Activated T-helper 2 cell treated with anti-CD3 and anti-CD28 coated beads, Interferon-gamma antibody, Interleukin-2, Interleukin-4, amounts not matched to agents 10 μg/mL and 5 μg/mL and 100 μg/mL, durations not matched to agents 14 hours and 24 hours and 36 hours (primary cell): ENCODE measurements at regions of chr22 and their contacts with region 1.

Region 1: GRCh38 chr22:37043828-37044538 is 7.6 kb upstream of the KCTD17 start:
- DNase-seq: peak; percentile 45
- H3K4me3 Mint-ChIP-seq: no peak overlapping the region
- H3K27ac Mint-ChIP-seq: no peak overlapping the region
- H3K4me1 Mint-ChIP-seq: peaks cover 15% of the 10 kb centered on the region
- H3K27me3 Mint-ChIP-seq: no peaks in the 10 kb centered on the region

Region 2: DNA sequence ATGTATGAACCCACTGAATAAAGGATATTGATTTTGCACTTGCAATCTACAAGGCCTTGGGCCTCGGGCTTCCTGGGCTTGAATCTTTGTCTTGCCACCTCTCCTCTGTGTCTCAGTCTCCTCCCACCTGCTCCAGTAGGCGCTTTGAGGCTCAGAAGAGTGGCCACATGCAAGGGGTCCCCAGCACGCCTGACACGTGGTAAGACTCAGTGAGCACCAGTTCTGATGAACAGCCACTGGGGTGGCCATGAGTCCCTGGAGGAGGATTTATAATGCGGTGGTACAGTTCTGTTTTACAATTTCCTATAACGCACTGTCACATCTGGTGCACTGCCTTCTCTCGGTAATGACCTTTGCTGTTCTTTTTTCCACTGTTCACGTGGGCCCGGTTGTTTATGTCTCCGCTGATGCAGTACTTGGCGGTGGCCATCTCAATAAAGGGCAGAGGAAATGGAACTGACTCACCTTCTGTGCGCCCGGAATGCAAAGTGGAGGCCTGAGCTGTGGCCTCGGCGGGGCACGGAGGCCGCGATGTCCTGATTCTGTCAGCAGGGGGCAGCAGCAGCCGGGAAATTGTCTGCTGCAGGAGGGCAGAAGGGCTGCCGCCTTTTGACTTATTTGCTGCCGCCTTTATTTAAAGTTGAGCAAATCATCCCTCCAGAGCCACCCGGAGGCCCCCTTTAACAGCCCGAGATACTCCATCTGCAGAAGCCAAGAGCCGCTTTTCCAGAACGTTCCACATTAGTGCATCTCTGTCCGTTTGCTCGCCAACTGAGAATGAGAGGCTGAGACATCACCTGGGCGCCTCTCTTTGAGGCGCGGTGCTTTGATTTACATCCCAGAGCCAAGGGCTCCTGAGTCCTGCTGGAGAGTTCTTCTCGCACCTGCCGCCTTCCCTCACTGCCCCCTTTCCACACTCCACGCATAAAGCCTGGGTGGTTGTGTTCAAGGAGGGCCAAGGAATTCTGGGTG is 262.0 kb before region 1 on chr22:
- intact Hi-C with region 1: loop called (anchors 10 kb)
- DNase-seq: peak; percentile 83
- H3K4me3 Mint-ChIP-seq: peak overlapping the region; percentile 7
- H3K27ac Mint-ChIP-seq: peak overlapping the region; percentile 93
- H3K4me1 Mint-ChIP-seq: peaks cover 27% of the 10 kb centered on the region
- H3K27me3 Mint-ChIP-seq: peaks cover 7% of the 10 kb centered on the region

Region 3: DNA sequence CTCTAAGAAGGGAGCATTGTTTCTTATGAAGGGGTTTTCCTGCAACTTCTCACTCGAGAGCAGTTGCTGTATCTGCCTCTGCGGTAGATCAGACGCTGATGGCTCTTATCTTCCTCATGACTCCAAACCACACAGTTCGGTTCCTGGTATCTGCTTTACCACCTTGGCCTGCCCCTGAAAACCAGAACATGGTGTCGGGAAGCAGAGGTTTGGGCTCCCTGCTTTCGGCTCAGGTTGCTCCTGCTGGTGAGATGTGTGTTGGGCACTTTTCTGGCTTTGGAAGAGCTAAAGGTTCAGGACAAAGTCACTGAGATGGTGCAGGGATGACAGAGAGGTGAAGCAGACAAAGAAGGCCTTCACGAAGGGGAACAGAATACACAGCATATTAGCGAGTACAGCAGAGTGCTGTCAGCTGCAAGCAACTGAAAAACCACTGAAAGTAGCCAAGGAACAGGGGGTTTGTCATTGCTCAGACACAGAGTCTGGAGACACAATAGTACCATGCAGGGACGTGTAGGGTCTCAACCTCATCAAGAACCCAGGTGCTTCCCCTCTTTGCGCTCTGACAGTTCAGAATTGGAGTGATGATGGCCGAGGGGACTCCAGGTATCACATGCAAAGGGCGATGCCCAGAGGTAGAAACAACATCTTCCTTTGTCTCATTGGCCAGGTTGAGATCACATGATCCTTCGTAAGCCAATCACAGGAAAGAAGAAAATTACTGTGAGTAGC is 142.4 kb before region 1 on chr22:
- intact Hi-C with region 1: no loop called
- DNase-seq: peak; percentile 57
- H3K4me3 Mint-ChIP-seq: peak overlapping the region; percentile 57
- H3K27ac Mint-ChIP-seq: peak overlapping the region; percentile 95
- H3K4me1 Mint-ChIP-seq: peaks cover 31% of the 10 kb centered on the region
- H3K27me3 Mint-ChIP-seq: peaks cover 7% of the 10 kb centered on the region